ENCODE measurements at regions of chr3 and their contacts with region 1.

Region 1: DNA sequence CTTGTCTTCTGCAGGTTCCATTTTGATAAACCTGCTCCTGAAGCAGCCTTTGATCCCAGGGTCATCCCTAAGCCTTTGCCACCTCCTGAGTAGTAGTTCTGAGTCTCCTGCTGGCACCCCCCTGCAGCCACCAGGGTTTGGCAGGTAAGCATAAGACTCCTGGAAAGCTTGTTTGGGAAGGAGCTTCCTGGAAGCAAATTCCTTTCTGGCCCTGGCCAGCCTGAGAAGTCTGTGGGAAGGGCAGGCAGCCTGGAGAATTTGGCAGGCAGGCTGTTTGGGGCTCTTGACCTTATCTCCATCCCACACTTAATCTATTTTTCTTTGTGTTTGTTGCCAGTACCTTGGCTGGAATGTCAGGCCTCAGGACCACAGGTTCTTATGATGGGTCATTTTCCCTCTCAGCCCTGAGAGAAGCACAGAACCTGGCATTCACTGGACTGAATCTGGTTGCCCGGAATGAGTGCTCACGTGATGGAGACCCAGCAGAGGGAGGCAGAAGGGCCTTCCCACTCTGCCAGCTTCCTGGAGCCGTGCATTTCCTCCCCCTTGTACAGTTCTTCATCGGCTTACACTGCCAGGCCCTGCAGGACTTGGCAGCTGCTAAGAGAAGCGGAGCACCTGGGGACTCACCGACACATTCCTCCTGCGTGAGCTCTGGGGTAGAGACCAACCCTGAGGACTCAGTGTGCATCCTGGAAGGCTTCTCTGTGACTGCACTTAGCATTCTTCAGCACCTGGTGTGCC is 13.4 kb downstream of the ATRIP start:
- DNase-seq: no peak
- H3K4me3 Mint-ChIP-seq: no peak overlapping the region
- H3K27ac Mint-ChIP-seq: no peak overlapping the region
- H3K4me1 Mint-ChIP-seq: peaks cover 15% of the 10 kb centered on the region
- H3K27me3 Mint-ChIP-seq: no peaks in the 10 kb centered on the region

Region 2: GRCh38 chr3:48352547-48352946 is 107.4 kb before region 1 on chr3:
- CTCF ChIA-PET with region 1: no interaction called
- POLR2A ChIA-PET with region 1: no interaction called
- DNase-seq: no peak
- H3K4me3 Mint-ChIP-seq: no peak overlapping the region
- H3K27ac Mint-ChIP-seq: no peak overlapping the region
- H3K4me1 Mint-ChIP-seq: no peaks in the 10 kb centered on the region
- H3K27me3 Mint-ChIP-seq: peaks cover 12% of the 10 kb centered on the region

Region 3: GRCh38 chr3:48472915-48473616 is 13.1 kb after region 1 on chr3:
- CTCF ChIA-PET with region 1: interaction called, 17 read pairs
- POLR2A ChIA-PET with region 1: no interaction called
- DNase-seq: peak; percentile 98
- H3K4me3 Mint-ChIP-seq: peak overlapping the region; percentile 84
- H3K27ac Mint-ChIP-seq: peak overlapping the region; percentile 98
- H3K4me1 Mint-ChIP-seq: peaks cover 73% of the 10 kb centered on the region
- H3K27me3 Mint-ChIP-seq: no peaks in the 10 kb centered on the region

Region 4: DNA sequence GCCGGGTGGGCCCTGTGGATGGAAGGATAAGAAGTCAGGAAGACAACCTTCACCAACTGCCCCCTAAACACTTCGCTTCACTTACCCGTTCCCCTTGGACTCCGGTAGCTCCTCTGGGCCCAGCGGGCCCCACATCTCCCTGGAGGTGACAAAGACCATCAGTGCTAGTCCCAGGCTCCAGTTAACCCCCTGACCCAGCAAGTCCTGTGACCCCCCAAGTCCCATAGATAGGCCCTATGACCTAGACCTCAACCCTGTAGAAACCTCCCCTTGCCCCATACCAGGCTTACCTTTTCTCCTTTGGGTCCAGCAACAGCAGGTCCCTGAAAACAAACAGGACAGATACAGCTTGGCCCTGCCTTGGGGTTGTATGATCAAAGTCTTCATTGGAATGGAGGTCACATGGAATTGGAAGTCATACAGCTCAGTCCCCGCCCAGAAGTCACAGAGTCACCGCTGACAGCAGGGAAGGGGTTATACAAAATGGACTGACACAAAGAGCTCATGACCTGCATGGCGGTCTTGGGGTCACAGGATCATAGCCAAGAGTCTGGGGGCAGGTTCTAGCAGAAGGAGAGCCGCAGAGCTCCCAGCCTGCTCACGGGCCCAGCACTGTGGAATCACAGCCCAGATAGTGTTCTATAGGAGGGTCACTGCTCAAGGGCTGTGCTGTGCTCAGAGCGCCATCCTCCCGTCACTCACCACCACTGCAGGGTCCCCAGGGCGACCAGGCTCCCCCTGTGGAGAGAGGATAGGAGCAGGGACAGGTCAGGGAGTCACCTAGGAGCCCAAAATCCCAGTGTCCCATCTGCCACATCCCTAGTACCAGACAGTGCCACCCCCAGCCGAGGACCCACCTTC is 121.9 kb after region 1 on chr3:
- CTCF ChIA-PET with region 1: no interaction called
- POLR2A ChIA-PET with region 1: no interaction called
- DNase-seq: no peak
- H3K4me3 Mint-ChIP-seq: no peak overlapping the region
- H3K27ac Mint-ChIP-seq: no peak overlapping the region
- H3K4me1 Mint-ChIP-seq: no peaks in the 10 kb centered on the region
- H3K27me3 Mint-ChIP-seq: no peaks in the 10 kb centered on the region

Region 5: GRCh38 chr3:48623851-48624547 is 164.1 kb after region 1 on chr3:
- CTCF ChIA-PET with region 1: no interaction called
- POLR2A ChIA-PET with region 1: no interaction called
- DNase-seq: no peak
- H3K4me3 Mint-ChIP-seq: no peak overlapping the region
- H3K27ac Mint-ChIP-seq: peak overlapping the region; percentile 68
- H3K4me1 Mint-ChIP-seq: peaks cover 15% of the 10 kb centered on the region
- H3K27me3 Mint-ChIP-seq: no peaks in the 10 kb centered on the region

Measured in activated CD4-positive, alpha-beta T cell treated with anti-CD3 and anti-CD28 coated beads, Interleukin-2, amount 10 ng/mL, durations not matched to agents 7 days and 5 days (primary cell).